ENCODE measurements at regions of chr12 and their contacts with region 1.

Region 1: DNA sequence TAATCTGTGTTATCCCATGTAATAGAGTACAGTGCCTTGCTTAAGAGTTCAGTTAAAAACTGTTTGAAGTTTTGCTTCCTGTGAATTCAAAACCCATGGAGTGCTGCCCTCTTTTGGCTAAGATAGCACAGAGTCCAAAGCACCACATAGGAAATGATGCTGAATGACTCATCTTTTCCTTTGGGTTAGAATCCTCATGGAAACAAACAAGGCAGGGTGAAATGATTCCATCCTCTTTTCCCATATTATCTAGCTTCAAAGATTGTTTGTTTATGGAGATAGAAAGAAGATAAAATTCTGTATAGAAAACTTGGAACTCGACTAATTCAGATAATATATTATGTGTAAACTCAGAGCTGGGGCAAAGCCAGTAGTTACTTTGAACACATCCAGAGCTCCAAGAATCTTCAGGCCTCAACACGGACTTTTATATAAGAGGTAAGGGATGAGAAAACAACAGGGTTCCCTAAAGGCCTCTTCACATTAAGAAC is 87.4 kb downstream of the OTOGL start:
- DNase-seq: peak; percentile 26
- ATAC-seq: peak; percentile 77
- H3K4me3 ChIP-seq: no peak overlapping the region
- H3K27ac ChIP-seq: no peak overlapping the region
- H3K4me1 ChIP-seq: peaks cover 9% of the 10 kb centered on the region
- H3K27me3 ChIP-seq: no peaks in the 10 kb centered on the region; a peak in 1 of 4 replicates
- CTCF ChIP-seq: peak; percentile 58 to 74 (median 68)
- EP300 ChIP-seq: peak in 1 of 2 experiments; percentile 41; a peak in 1 of 4 replicates
- POLR2A ChIP-seq: no peak
- RAD21 ChIP-seq: peak; percentile 86

Region 2: DNA sequence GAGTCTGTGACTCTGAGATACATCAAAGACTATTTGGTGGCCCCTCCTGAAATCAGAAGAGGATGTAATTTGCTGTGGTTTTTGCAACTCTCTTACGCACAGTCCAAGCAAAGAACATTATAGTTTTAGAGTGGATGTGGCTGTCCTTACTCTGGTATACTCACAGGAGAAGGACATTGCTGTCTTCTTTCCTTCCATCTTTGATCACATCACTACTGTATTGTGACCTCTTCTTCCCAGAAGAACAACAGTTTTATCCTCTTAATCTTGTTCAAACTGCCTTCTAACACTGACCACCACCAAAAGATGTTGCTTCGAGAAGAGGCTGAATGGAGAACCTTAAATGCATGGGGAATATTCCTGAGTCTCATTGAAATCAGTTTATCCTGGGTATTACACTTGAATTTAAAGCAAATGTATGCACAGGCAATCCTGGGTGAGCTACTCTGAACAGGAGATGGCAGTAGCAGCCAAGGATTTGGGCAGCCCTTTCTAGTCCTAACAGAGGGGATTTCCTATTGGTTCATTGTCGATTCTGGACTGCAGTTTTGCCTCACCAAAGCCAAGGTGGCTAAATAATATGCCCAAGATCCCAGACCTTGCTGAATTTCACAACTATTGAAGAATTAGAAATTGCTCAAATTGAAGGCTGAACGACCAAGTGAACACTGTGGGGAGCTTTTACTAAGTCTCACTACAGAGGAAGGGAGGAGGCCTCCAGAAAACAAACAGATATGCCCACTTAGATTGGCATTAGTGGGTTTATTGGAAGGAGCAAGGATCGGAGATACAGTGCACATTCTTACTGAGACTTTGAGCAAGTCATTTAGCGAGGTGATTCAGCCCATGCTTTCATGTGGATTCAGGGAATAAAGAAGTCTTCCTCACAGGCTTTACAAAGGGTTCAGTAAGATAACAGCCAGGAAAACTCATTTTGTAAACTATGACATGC is 778.8 kb before region 1 on chr12:
- CTCF ChIA-PET with region 1: no interaction called
- POLR2A ChIA-PET with region 1: no interaction called
- RAD21 ChIA-PET with region 1: no interaction called
- SMC1A ChIA-PET with region 1: no interaction called
- in situ Hi-C with region 1: no loop called
- intact Hi-C with region 1: loop called (anchors 1 kb)
- DNase-seq: peak; percentile 9
- ATAC-seq: peak; percentile 99
- H3K4me3 ChIP-seq: no peak overlapping the region
- H3K27ac ChIP-seq: no peak overlapping the region
- H3K4me1 ChIP-seq: no peaks in the 10 kb centered on the region
- H3K27me3 ChIP-seq: no peaks in the 10 kb centered on the region
- CTCF ChIP-seq: peak; percentile 54 to 81 (median 55); a peak in 5 of 6 replicates
- EP300 ChIP-seq: no peak
- POLR2A ChIP-seq: no peak
- RAD21 ChIP-seq: peak; percentile 79

Region 3: DNA sequence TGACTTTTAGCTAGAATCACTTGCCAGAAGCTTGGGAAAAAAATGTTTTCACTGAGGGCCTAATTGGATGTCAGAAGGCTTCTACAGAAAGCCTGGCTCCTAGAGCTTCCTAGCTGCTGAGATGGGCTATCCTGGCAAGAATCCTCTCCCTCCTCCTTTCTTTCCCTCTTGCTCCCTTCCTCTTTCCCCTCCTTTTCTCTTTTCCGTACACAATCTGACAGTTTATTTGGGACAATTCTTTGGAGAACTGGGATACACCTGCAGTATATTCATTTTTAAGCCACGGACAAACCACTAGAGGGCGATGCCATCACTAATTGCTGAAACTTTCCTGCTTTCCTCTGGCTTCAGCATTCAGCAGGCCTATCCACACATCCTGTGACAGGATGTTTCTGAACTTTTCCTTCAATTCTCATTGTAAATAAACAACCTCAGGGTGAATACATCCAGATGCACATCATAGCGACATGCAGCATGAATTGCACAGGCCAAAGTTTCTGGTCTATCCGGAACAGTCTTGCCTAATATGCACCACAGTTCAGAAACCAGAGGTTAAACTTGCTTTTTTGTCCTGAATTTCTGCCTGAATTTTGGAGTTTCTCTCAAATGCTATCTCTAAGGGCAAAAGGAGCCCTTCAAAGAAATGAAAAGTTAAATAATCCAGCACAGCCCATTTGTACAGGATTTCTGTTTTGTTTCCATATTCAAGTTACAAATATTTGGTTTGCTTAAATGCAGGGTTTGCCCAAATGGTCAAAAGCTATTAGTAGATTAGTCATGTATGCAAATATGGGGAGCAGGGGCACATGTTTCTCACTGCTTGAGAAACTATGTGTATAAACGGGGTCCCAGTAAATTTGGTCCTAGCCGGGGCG is 638.8 kb before region 1 on chr12:
- CTCF ChIA-PET with region 1: no interaction called
- POLR2A ChIA-PET with region 1: no interaction called
- RAD21 ChIA-PET with region 1: no interaction called
- SMC1A ChIA-PET with region 1: interaction called, 3 read pairs
- in situ Hi-C with region 1: loop called (anchors 5 kb)
- intact Hi-C with region 1: no loop called
- DNase-seq: peak; percentile 9
- ATAC-seq: peak; percentile 88
- H3K4me3 ChIP-seq: no peak overlapping the region
- H3K27ac ChIP-seq: no peak overlapping the region
- H3K4me1 ChIP-seq: no peaks in the 10 kb centered on the region
- H3K27me3 ChIP-seq: no peaks in the 10 kb centered on the region
- CTCF ChIP-seq: peak; percentile 69 to 74 (median 71)
- EP300 ChIP-seq: no peak
- POLR2A ChIP-seq: no peak
- RAD21 ChIP-seq: peak; percentile 74

Region 4: DNA sequence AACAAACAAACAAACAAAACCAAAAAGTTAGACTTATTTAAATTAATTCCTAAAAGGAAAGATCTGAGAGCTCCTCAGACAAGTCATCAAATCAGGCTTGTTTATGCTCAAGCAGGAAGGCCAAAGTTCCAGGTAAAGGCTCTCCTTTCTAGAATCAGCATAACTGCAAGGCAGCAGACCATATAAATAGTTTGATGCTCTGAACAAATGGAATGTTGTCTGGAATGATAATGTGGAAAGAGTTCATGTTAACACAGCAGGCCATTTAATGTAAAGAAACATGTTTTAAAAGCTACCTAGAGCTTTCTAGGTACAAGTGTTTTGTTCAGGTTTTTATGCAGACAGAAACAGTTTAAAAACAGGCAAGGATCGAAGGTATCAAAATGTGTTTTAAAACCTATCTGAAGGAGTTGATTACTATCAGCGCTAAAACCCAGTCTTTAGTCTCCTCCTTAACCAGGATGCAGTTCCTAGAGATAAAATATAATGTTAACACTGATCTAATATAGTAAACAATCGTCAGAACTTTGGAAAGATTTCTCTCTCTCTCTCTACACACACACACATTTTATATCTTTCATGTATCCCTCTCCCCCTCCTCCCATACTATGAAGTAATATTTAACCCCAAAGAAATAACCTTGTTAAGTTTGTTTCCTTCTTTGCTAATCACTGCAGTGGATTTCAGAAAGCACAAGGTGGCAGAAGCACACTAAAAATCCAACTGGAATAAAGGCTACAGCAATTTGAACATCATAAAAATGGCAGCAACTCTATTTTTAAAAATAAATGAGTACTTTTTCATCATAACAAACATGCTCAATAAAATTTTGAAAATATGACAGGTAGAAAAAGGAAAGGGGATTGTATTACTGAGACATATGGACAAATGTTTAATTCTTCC is 631.5 kb before region 1 on chr12:
- CTCF ChIA-PET with region 1: no interaction called
- POLR2A ChIA-PET with region 1: no interaction called
- RAD21 ChIA-PET with region 1: interaction called, 3 read pairs
- SMC1A ChIA-PET with region 1: no interaction called
- in situ Hi-C with region 1: loop called (anchors 5 kb)
- intact Hi-C with region 1: loop called (anchors 5 kb)
- DNase-seq: no peak
- ATAC-seq: peak; percentile 39; the same call in 2 of the 3 replicates
- H3K4me3 ChIP-seq: no peak overlapping the region
- H3K27ac ChIP-seq: no peak overlapping the region
- H3K4me1 ChIP-seq: no peaks in the 10 kb centered on the region
- H3K27me3 ChIP-seq: no peaks in the 10 kb centered on the region
- CTCF ChIP-seq: peak; percentile 40 to 84 (median 48); a peak in 5 of 6 replicates
- EP300 ChIP-seq: no peak
- POLR2A ChIP-seq: no peak
- RAD21 ChIP-seq: peak; percentile 93

Region 5: DNA sequence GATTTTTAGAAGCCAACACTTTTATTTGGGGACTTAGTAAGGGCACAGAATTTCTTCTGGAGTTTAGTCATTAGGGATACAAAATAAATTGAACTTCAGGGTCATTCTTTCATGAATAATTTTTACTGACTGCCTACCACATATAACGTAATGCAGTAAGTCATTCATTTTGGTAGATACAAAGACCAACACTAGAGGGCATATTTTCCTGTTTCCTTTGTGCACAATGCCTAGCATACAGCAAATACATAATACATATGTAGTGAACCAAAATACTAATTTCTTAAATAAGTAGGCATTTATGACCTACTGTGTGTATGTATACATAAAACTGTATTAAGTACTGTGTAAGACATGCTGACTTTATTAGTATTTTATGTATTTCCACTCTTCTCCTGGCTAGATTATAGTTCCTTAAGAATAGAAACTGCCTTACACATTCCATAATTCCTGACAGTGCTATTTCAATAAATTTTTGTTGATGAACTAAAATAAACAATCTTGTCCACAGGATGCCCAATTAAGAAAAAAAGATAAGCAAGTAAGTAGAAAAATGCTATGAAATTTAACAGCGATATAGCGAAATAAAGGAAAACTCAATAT is 299.8 kb before region 1 on chr12:
- CTCF ChIA-PET with region 1: interaction called, 13 read pairs
- POLR2A ChIA-PET with region 1: no interaction called
- RAD21 ChIA-PET with region 1: interaction called, 6 read pairs
- SMC1A ChIA-PET with region 1: interaction called, 16 read pairs
- in situ Hi-C with region 1: no loop called
- intact Hi-C with region 1: loop called (anchors 1 kb)
- DNase-seq: peak; percentile 23
- ATAC-seq: peak; percentile 94
- H3K4me3 ChIP-seq: no peak overlapping the region
- H3K27ac ChIP-seq: no peak overlapping the region
- H3K4me1 ChIP-seq: no peaks in the 10 kb centered on the region
- H3K27me3 ChIP-seq: no peaks in the 10 kb centered on the region
- CTCF ChIP-seq: peak; percentile 49 to 57 (median 51); a peak in 5 of 6 replicates
- EP300 ChIP-seq: no peak
- POLR2A ChIP-seq: no peak
- RAD21 ChIP-seq: peak; percentile 41; the same call in 1 of the 2 replicates

Region 6: GRCh38 chr12:79935021-79935623 is 251.7 kb before region 1 on chr12 and contains the start of gene PPP1R12A:
- CTCF ChIA-PET with region 1: interaction called, 4 read pairs
- POLR2A ChIA-PET with region 1: no interaction called
- RAD21 ChIA-PET with region 1: interaction called, 4 read pairs
- SMC1A ChIA-PET with region 1: interaction called, 5 read pairs
- in situ Hi-C with region 1: no loop called
- intact Hi-C with region 1: loop called (anchors 5 kb)
- DNase-seq: peak; percentile 83
- ATAC-seq: peak; percentile 91
- H3K4me3 ChIP-seq: peak within 1 kb of the TSS; percentile 96
- H3K27ac ChIP-seq: peak within 1 kb of the TSS; percentile 96
- H3K4me1 ChIP-seq: peaks cover 7% of the 10 kb centered on the region; the same call in 1 of the 2 replicates
- H3K27me3 ChIP-seq: no peaks in the 10 kb centered on the region
- CTCF ChIP-seq: peak in 1 of 3 experiments; percentile 9; a peak in 1 of 6 replicates
- EP300 ChIP-seq: no peak
- POLR2A ChIP-seq: peak; percentile 97
- RAD21 ChIP-seq: no peak
- polyA plus RNA-seq, gene PPP1R12A: 22.8 to 31.6 TPM

Region 7: GRCh38 chr12:80142640-80143039 is 44.1 kb before region 1 on chr12:
- CTCF ChIA-PET with region 1: no interaction called
- POLR2A ChIA-PET with region 1: no interaction called
- RAD21 ChIA-PET with region 1: no interaction called
- SMC1A ChIA-PET with region 1: no interaction called
- in situ Hi-C with region 1: no loop called
- intact Hi-C with region 1: no loop called
- DNase-seq: no peak
- ATAC-seq: no peak
- H3K4me3 ChIP-seq: no peak overlapping the region
- H3K27ac ChIP-seq: no peak overlapping the region
- H3K4me1 ChIP-seq: no peaks in the 10 kb centered on the region
- H3K27me3 ChIP-seq: no peaks in the 10 kb centered on the region; a peak in 1 of 4 replicates
- CTCF ChIP-seq: no peak
- EP300 ChIP-seq: no peak
- POLR2A ChIP-seq: no peak
- RAD21 ChIP-seq: no peak